ENCODE measurements at regions of chr12 and their contacts with region 1.

Region 1: GRCh38 chr12:11171145-11171968 is at the start of gene SMIM10L1:
- DNase-seq: peak; percentile 53
- H3K4me3 ChIP-seq: peak within 1 kb of the TSS; percentile 90
- CTCF ChIP-seq: no peak

Region 2: DNA sequence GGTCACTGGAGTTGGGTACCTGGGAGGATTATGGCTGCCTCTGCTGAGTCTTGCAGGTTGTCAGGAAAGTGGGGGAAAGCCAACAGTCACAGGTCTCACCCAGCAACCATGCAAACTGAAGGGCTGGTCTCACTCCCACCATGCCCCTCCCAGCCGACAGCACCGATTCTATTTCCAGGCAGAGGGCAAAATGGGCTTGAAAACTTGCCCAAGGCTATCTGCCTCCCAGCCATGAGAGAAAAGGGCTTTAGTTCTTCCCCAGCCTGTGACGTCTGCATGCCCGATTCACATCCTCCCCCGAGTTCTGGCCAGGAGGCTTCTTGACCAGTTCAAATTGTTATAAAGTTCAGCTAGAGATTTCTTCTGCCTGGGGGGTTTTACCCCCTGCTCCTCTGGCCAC is 27.1 kb before region 1 on chr12:
- CTCF ChIA-PET with region 1: no interaction called
- POLR2A ChIA-PET with region 1: no interaction called
- DNase-seq: no peak
- H3K4me3 ChIP-seq: no peak overlapping the region
- CTCF ChIP-seq: no peak

Region 3: DNA sequence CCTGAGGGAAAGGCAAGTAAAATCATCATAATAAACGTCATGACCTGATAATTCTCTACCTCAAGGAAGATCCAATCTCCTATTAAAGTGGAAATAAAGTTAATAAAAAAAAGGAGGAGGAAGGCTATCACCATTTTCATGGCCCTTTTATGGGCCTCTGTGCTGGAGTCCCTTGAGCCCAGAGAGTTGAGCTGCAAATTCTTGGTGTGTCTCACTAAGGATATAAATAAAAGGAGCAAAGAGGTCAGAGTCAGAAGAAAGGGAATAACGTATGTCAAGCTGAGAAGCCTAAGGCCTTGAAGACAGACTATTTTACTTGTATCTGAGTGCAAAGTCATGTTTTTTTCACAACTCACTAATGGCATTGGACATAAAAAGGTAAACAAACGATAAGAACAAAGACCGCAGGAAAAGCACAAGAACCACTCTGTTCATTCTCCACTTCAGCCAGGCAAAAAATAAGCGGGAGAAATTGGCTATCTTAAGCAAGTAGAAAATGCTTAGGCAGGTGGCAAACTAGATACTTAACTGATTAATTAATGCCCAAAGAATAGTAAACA is 12.4 kb before region 1 on chr12:
- CTCF ChIA-PET with region 1: interaction called, 5 read pairs
- POLR2A ChIA-PET with region 1: interaction called, 13 read pairs
- DNase-seq: no peak
- H3K4me3 ChIP-seq: no peak overlapping the region
- CTCF ChIP-seq: no peak

Region 4: DNA sequence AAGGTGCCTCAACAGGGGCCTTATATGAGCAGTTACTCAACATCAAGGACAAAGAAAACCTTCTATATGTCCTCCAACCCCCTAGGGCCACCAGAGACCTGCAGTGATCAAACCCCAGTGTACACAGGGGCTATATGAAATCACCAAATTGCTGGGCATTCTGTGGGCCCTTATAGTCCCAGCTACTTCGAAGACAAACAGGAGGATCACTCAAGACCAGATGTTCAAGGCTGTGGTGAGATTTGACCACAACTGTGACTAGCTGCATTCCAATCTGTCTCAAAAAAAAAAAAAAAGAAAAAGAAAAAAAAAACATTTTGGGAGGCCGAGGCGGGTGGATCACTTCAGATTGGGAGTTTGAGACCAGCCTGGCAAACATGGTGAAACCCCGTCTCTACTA is 275.0 kb after region 1 on chr12:
- CTCF ChIA-PET with region 1: no interaction called
- POLR2A ChIA-PET with region 1: no interaction called
- DNase-seq: no peak
- H3K4me3 ChIP-seq: no peak overlapping the region
- CTCF ChIP-seq: no peak